HEK293 (cell line): ENCODE measurements at regions of chr10 and their contacts with region 1.

Region 1: GRCh38 chr10:97463363-97464132 is 17.6 kb downstream of the ZDHHC16 start:
- H3K4me3 ChIP-seq: no peak overlapping the region
- H3K27ac ChIP-seq: no peak overlapping the region
- H3K4me1 ChIP-seq: no peaks in the 10 kb centered on the region
- CTCF ChIP-seq: peak; percentile 82

Region 2: GRCh38 chr10:97475936-97476594 is 12.5 kb after region 1 on chr10:
- CTCF ChIA-PET with region 1: interaction called, 37 read pairs
- POLR2A ChIA-PET with region 1: no interaction called
- H3K4me3 ChIP-seq: no peak overlapping the region
- H3K27ac ChIP-seq: no peak overlapping the region
- H3K4me1 ChIP-seq: no peaks in the 10 kb centered on the region
- CTCF ChIP-seq: no peak

Region 3: DNA sequence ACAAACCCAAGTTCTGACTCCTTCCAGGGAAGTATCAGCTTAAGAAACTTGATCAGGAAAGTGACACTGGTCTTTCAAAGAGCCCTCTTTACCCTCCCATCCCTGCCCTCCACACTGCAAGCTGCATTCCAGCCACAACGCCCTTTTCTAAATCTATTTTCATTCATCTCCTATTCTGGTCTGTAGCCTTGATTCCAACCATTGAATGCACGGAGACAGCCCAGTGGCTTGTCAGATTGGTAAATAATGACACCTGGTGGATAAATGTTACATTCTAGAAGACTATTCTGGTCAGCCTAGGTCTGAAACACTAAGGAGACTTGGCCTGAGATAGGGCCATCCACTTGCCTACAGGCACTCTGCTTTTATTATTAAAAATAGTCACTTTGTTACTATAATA is 148.8 kb after region 1 on chr10:
- CTCF ChIA-PET with region 1: interaction called, 10 read pairs
- POLR2A ChIA-PET with region 1: no interaction called
- H3K4me3 ChIP-seq: no peak overlapping the region
- H3K27ac ChIP-seq: no peak overlapping the region
- H3K4me1 ChIP-seq: no peaks in the 10 kb centered on the region
- CTCF ChIP-seq: peak; percentile 70; the same call in 1 of the 2 replicates